ENCODE measurements at regions of chr7 and their contacts with region 1.

Region 1: DNA sequence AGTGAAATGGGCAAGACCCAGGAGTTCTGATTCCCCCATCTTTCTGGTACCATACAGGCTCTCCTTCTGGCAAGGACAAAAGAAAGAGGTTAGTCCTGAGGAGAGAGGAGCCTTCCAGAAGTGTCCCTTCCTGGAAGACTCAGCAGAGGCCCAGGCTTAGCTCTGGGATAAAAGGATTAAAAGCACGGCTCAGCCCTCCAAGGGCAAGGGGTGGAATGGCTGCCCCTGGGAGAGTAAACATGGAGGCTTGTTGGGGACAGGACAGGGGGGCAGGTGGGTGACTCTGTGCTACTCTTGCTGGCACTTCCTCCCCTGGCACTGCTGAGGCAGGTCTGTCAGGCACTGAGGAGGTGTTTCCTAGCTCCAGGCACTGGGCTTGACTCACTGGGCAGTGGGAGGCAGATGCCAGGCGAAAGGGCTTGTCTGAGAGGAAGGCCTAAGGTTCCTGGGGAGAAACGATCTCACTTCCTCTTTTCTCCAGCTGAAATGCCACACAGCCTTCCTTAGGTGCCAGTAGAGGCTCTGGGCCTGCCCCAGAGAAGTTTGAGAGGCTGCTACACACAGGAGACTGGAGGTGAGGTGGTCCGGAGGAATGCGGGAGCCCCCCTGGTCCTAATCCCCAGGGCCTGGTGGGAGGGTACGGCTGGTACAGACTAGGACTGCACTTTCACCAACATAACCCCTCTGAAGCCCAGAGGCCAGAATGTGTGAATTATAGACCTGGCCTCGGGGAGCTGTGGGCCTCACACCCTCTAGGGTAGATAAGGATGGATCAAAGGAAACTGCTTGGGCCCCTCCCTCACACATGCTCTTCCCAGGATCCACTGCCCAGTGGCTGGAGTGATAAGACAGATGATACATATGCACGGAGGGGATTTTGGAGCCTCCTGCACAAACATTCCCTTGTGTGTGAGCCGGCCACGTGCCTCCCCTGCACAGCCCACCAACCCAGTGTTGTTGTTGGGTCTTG is 63.2 kb upstream of the PODXL start:
- DNase-seq: no peak
- H3K4me3 ChIP-seq: no peak overlapping the region
- H3K27me3 ChIP-seq: peaks cover 5% of the 10 kb centered on the region; the same call in 1 of the 2 replicates
- CTCF ChIP-seq: no peak

Region 2: DNA sequence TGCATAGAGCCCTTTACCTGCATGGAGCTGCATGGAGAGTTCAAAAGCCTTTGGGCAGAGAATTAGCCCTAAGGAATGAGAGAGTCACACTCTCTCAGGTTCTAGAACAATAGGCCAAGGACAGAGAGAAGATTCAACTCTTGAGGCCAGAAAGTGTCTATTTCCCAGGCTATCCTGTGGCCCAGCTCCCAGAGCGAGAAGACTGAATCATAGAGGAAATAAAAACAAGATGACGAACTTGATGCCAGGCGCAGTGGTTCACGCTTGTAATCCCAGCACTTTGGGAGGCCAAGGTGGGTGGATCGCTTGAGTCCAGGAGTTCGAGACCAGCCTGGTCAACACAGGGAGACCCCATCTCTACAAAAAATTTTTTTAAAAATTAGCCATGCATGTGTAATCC is 44.9 kb before region 1 on chr7:
- CTCF ChIA-PET with region 1: no interaction called
- POLR2A ChIA-PET with region 1: no interaction called
- DNase-seq: no peak
- H3K4me3 ChIP-seq: no peak overlapping the region
- H3K27me3 ChIP-seq: peaks cover 4% of the 10 kb centered on the region
- CTCF ChIP-seq: no peak

Region 3: DNA sequence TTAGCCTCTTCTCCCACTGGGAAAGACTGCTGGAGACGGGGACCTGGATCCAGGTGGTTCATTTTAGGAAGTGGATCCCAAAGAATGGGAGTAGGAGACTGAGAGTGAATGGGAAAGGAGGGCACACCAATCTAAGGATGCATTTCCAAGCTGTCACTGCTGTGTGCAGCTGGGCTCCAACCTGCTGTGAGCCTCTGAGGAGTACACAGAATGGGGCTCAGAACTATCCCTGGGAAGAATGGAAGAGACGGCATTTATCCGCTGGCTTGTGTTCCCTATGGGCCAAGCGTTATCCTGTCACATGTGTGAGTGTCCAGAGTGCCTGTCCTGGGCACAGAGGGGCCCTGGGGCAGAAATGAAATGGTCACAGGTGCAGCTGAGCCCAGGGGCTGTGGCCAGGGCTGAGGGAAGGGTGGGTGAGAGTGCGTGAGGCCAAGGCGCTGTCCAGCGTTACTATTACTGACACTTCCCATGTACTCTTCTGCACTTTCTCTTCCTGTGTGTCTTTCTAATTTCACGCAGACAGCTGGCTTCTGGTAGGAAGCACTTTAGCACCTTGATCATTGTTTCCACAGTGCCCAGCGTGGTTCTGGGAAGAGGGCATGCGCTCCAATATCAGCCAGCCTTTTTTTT is 27.8 kb before region 1 on chr7:
- CTCF ChIA-PET with region 1: no interaction called
- POLR2A ChIA-PET with region 1: no interaction called
- DNase-seq: no peak
- H3K4me3 ChIP-seq: no peak overlapping the region
- H3K27me3 ChIP-seq: peaks cover 10% of the 10 kb centered on the region
- CTCF ChIP-seq: no peak

Region 4: DNA sequence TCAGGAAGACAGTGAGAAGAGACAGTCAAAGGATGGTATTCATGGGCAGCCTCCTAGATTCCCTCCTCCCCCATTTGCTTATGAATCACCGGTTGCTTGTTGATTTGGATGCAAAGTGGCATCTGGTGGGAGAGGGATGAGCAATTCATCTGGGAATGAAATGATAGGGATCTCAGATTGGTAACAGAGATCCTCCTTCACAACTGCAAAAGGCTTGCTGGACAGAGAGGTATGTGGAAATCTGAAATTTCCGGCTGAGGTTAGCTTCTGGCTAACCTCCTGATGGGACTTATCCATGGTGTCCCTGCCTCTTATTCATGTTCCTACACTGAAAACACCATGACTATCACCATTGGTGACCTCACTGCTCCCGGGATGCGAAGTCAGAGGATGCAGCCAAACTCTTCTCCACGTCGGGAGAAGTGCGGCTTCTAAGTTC is 14.8 kb before region 1 on chr7:
- CTCF ChIA-PET with region 1: no interaction called
- POLR2A ChIA-PET with region 1: no interaction called
- DNase-seq: peak; percentile 83
- H3K4me3 ChIP-seq: no peak overlapping the region
- H3K27me3 ChIP-seq: peaks cover 25% of the 10 kb centered on the region
- CTCF ChIP-seq: no peak

Region 5: GRCh38 chr7:131636092-131636491 is 16.5 kb after region 1 on chr7:
- CTCF ChIA-PET with region 1: no interaction called
- POLR2A ChIA-PET with region 1: interaction called, 14 read pairs
- DNase-seq: no peak
- H3K4me3 ChIP-seq: no peak overlapping the region
- H3K27me3 ChIP-seq: no peaks in the 10 kb centered on the region
- CTCF ChIP-seq: no peak

Measured in BJ (cell line).